ENCODE measurements at regions of chr17 and their contacts with region 1.

Region 1: GRCh38 chr17:48678141-48678971 is 44.0 kb downstream of the PRAC1 start:
- DNase-seq: peak; percentile 51 to 97
- H3K4me3 ChIP-seq: peak overlapping the region; percentile 8 to 55 (median 40); a peak in 7 of 8 replicates
- H3K27ac ChIP-seq: no peak overlapping the region
- H3K4me1 ChIP-seq: peaks cover 0 to 9% (median 2%) of the 10 kb centered on the region in 4 experiments; a peak in 4 of 7 replicates
- H3K27me3 ChIP-seq: peaks cover 5 to 22% (median 19%) of the 10 kb centered on the region in 4 experiments
- CTCF ChIP-seq: peak; percentile 91 to 99 (median 91)
- EP300 ChIP-seq: no peak
- POLR2A ChIP-seq: no peak
- RAD21 ChIP-seq: peak; percentile 95 to 98

Region 2: DNA sequence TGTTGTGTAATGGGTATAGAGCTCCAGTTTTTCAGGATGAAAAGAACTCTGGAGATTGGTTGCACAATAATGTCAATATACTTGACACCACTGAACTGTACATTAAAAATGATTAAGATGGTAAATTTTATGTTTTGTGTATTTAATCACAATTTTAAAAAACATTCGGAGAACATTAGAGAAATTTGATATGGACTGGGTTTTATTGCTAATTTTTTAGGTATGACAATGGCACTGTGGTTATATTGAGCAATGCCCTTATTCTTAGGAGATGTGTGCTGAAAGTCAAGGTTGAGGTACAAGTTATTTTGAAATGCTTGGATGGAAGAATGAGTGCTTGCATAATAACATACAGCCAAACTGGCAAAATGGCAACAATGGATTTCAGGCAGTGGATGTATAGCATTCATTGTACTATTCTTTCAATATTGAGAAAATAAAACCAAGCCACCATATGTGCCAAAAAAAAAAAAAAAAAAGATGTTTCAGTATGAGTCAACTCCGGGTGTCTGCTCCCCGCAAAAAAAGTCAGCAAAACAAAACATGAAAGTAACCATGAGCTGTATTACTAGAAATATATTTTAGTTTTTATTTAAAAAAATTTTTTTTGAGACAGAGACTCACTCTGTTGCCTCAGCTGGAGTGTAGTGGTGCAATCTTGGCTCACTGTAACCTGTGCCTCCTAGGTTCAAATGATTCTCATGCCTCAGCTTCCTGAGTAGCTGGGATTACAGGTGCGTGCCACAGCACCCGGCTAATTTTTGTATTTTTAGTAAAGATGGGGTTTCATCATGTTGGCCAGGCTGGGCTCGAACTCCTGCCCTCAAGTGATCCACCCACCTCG is 167.4 kb before region 1 on chr17:
- CTCF ChIA-PET with region 1: no interaction called
- POLR2A ChIA-PET with region 1: no interaction called
- DNase-seq: no peak
- H3K4me3 ChIP-seq: no peak overlapping the region
- H3K27ac ChIP-seq: no peak overlapping the region
- H3K4me1 ChIP-seq: no peaks in the 10 kb centered on the region; a peak in 4 of 7 replicates
- H3K27me3 ChIP-seq: peaks cover 0 to 10% (median 0%) of the 10 kb centered on the region in 4 experiments; a peak in 4 of 7 replicates
- CTCF ChIP-seq: no peak
- EP300 ChIP-seq: no peak
- POLR2A ChIP-seq: no peak
- RAD21 ChIP-seq: no peak

Region 3: DNA sequence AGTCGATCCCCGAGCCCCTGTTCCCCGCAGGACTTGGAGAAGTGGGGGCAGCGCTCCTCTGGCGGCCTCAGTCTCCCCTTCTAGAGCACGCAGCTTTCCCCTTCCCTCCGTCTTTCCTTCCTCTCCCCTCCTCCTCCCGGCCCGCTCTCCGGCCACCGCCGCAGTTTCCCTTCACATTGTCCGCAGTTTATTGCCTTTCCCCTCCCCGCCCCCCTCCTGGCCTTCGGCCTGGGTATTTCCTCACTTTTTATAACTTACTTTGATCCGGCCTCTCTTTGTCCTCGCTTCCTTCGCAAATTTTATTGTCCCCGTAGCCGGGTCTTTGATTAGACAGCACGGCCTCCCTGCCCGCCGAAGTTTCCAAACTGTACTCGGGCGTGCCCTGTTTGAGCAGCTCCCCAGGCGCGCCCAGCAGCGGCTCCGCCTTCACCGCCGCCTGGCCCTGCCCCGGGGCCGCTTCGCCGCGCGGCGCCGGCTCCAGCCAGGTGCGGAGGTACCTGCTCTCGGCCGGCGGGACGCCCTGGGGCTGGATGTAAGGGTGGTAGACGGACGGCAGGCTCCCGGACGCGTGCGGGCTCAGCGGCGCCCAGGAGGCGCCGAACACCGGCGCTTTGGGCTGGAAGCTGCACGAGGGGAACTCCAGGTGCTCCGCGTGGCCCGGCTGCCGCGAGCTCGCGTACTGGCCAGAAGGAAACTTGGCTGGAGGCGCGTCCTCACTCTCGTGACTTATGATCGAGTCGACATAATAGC is 52.7 kb before region 1 on chr17:
- CTCF ChIA-PET with region 1: no interaction called
- POLR2A ChIA-PET with region 1: no interaction called
- DNase-seq: peak in 1 of 2 experiments; percentile 77
- H3K4me3 ChIP-seq: peak overlapping the region in 2 of 4 experiments; percentile 19 to 52; a peak in 5 of 8 replicates
- H3K27ac ChIP-seq: no peak overlapping the region
- H3K4me1 ChIP-seq: peaks cover 0 to 11% (median 5%) of the 10 kb centered on the region in 4 experiments; a peak in 5 of 7 replicates
- H3K27me3 ChIP-seq: peaks cover 98 to 100% (median 100%) of the 10 kb centered on the region in 4 experiments
- CTCF ChIP-seq: no peak
- EP300 ChIP-seq: no peak
- POLR2A ChIP-seq: no peak
- RAD21 ChIP-seq: no peak

Region 4: GRCh38 chr17:48690655-48691054 is 12.3 kb after region 1 on chr17:
- CTCF ChIA-PET with region 1: interaction called, 40 read pairs
- POLR2A ChIA-PET with region 1: interaction called, 3 read pairs
- DNase-seq: no peak
- H3K4me3 ChIP-seq: no peak overlapping the region
- H3K27ac ChIP-seq: no peak overlapping the region
- H3K4me1 ChIP-seq: no peaks in the 10 kb centered on the region
- H3K27me3 ChIP-seq: no peaks in the 10 kb centered on the region; a peak in 1 of 7 replicates
- CTCF ChIP-seq: no peak
- EP300 ChIP-seq: no peak
- POLR2A ChIP-seq: no peak
- RAD21 ChIP-seq: no peak

Region 5: DNA sequence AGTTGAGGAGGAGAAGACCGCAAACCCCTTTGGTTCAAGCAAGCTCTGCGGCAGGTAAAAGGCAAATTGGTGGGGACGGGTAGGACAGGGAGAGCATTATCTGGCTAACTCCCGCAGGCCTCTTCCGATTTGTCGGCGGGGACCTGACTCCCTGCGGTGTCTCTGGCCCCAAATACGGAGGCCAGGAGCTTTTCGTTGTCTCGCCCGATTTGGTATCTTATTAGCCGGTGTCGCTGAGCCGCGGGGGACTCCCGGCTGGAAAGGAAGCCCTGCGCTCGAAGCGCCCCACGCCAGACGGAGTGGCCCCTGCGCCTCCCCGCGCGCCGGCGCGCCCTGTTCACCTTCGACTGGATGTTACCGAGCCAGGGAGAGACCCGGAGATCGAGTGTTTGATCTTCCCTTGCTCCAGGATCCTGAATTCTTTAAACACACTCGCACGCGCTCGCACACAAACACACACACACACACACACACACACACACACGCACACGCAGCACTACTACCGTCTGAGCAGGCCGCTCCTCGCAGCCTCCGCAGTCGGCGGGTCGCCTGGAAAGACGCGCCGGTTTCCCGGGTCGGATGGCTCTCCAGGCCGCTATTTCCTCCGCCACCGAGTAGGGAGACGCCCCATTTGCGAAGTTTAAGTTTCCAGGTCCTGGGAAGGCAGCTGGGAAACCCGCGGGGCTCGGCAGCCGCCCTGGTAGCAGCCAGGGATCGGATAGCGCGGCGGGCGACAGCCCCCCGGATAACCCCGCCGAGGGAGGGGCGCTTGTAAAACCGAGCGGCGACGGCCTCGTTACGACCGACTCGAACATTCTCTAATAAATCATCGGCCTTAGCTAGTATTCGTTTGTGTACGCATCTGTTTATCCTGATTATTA is 40.6 kb after region 1 on chr17:
- CTCF ChIA-PET with region 1: interaction called, 101 read pairs
- POLR2A ChIA-PET with region 1: interaction called, 3 read pairs
- DNase-seq: peak in 1 of 2 experiments; percentile 76
- H3K4me3 ChIP-seq: peak overlapping the region; percentile 6 to 49 (median 20); a peak in 5 of 8 replicates
- H3K27ac ChIP-seq: no peak overlapping the region
- H3K4me1 ChIP-seq: peaks cover 11 to 39% (median 21%) of the 10 kb centered on the region in 4 experiments; a peak in 6 of 7 replicates
- H3K27me3 ChIP-seq: peaks cover 65 to 94% (median 84%) of the 10 kb centered on the region in 4 experiments
- CTCF ChIP-seq: no peak
- EP300 ChIP-seq: no peak
- POLR2A ChIP-seq: no peak
- RAD21 ChIP-seq: no peak

Region 6: GRCh38 chr17:48738803-48739526 is 60.6 kb after region 1 on chr17:
- CTCF ChIA-PET with region 1: interaction called, 21 read pairs
- POLR2A ChIA-PET with region 1: no interaction called
- DNase-seq: peak in 1 of 2 experiments; percentile 65
- H3K4me3 ChIP-seq: no peak overlapping the region
- H3K27ac ChIP-seq: no peak overlapping the region
- H3K4me1 ChIP-seq: no peaks in the 10 kb centered on the region; a peak in 2 of 7 replicates
- H3K27me3 ChIP-seq: peaks cover 92 to 100% (median 100%) of the 10 kb centered on the region in 4 experiments
- CTCF ChIP-seq: no peak
- EP300 ChIP-seq: no peak
- POLR2A ChIP-seq: no peak
- RAD21 ChIP-seq: no peak

Region 7: DNA sequence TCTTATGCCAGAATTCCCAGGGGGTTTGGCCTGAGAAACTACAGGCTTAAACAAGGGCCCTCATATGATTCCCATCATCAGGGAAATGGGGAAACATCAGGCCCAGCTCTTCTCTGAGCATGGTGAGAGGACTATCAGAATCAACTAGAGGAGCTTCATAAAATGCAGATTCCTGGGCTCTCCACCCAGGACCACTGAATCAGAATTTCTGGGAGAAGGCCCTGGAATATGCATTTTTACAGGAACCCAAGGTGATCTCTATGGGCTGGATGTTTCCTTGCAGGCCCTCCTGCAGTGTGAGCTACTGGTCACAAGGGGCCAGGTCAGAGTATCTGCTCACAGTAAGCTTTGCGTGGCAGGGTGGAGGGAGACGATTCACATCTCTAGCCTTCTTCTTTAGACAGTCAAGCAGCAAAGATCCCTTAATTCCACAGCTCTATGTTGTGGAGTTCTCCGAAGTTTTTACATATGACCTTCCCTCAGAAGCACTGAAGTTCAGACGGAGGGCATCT is 89.0 kb after region 1 on chr17:
- CTCF ChIA-PET with region 1: interaction called, 11 read pairs
- POLR2A ChIA-PET with region 1: no interaction called
- DNase-seq: no peak
- H3K4me3 ChIP-seq: no peak overlapping the region
- H3K27ac ChIP-seq: no peak overlapping the region
- H3K4me1 ChIP-seq: no peaks in the 10 kb centered on the region
- H3K27me3 ChIP-seq: peaks cover under 1 to 4% (median 2%) of the 10 kb centered on the region in 4 experiments; a peak in 5 of 7 replicates
- CTCF ChIP-seq: peak in 1 of 3 experiments; percentile 12; a peak in 1 of 4 replicates
- EP300 ChIP-seq: no peak
- POLR2A ChIP-seq: no peak
- RAD21 ChIP-seq: no peak

Region 8: GRCh38 chr17:48804925-48805411 is 126.6 kb after region 1 on chr17:
- CTCF ChIA-PET with region 1: interaction called, 46 read pairs
- POLR2A ChIA-PET with region 1: no interaction called
- DNase-seq: peak; percentile 68 to 97
- H3K4me3 ChIP-seq: peak overlapping the region in 1 of 4 experiments; percentile 35; a peak in 3 of 8 replicates
- H3K27ac ChIP-seq: no peak overlapping the region
- H3K4me1 ChIP-seq: no peaks in the 10 kb centered on the region; a peak in 2 of 7 replicates
- H3K27me3 ChIP-seq: peaks cover 0 to 2% (median 0%) of the 10 kb centered on the region in 4 experiments; a peak in 1 of 7 replicates
- CTCF ChIP-seq: peak; percentile 90 to 93 (median 90)
- EP300 ChIP-seq: no peak
- POLR2A ChIP-seq: no peak
- RAD21 ChIP-seq: peak; percentile 98